Activated naive CD4-positive, alpha-beta T cell treated with anti-CD3 and anti-CD28 coated beads for 36 hours (primary cell): ENCODE measurements at regions of chr3 and their contacts with region 1.

Region 1: DNA sequence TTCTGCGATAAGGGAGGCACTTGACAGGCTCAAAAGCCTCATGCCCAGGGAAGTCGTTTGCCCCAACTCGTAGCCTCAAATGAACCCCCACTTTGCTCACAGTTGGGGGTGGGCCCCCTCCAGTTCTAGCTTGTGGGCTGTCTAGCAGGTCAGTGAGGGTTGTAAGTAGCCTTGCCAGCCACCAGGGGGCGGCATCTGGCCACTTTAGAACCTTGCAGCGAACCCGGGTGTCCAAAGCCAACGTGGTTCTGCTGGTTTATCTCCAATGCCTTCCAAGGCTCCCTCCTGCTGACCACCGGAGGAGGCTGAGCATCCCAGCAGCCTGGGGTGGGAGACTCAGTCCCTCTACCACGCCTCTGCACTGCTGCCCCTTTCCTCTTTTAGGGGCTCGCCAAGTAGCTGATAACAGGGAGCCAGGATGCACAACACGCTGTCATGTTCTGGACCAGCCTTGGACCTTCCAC is 9.2 kb upstream of the RBSN start:
- DNase-seq: peak; percentile 76
- H3K4me3 Mint-ChIP-seq: no peak overlapping the region
- H3K27ac Mint-ChIP-seq: no peak overlapping the region
- H3K4me1 Mint-ChIP-seq: no peaks in the 10 kb centered on the region
- H3K27me3 Mint-ChIP-seq: no peaks in the 10 kb centered on the region

Region 2: GRCh38 chr3:15120986-15121385 is 12.9 kb after region 1 on chr3:
- CTCF ChIA-PET with region 1: interaction called, 42 read pairs
- intact Hi-C with region 1: no loop called
- DNase-seq: no peak
- H3K4me3 Mint-ChIP-seq: no peak overlapping the region
- H3K27ac Mint-ChIP-seq: no peak overlapping the region
- H3K4me1 Mint-ChIP-seq: peaks cover 5% of the 10 kb centered on the region
- H3K27me3 Mint-ChIP-seq: peaks cover 6% of the 10 kb centered on the region

Region 3: GRCh38 chr3:15256861-15257341 is 148.8 kb after region 1 on chr3:
- CTCF ChIA-PET with region 1: interaction called, 5 read pairs
- intact Hi-C with region 1: loop called (anchors 5 kb)
- DNase-seq: no peak
- H3K4me3 Mint-ChIP-seq: no peak overlapping the region
- H3K27ac Mint-ChIP-seq: no peak overlapping the region
- H3K4me1 Mint-ChIP-seq: peaks cover 7% of the 10 kb centered on the region
- H3K27me3 Mint-ChIP-seq: no peaks in the 10 kb centered on the region

Region 4: GRCh38 chr3:15405448-15406050 is 297.4 kb after region 1 on chr3:
- CTCF ChIA-PET with region 1: interaction called, 11 read pairs
- intact Hi-C with region 1: loop called (anchors 2 kb)
- DNase-seq: peak; percentile 10
- H3K4me3 Mint-ChIP-seq: no peak overlapping the region
- H3K27ac Mint-ChIP-seq: no peak overlapping the region
- H3K4me1 Mint-ChIP-seq: peaks cover 1% of the 10 kb centered on the region
- H3K27me3 Mint-ChIP-seq: no peaks in the 10 kb centered on the region

Region 5: GRCh38 chr3:15753056-15753710 is 645.1 kb after region 1 on chr3:
- CTCF ChIA-PET with region 1: no interaction called
- intact Hi-C with region 1: no loop called
- DNase-seq: no peak
- H3K4me3 Mint-ChIP-seq: no peak overlapping the region
- H3K27ac Mint-ChIP-seq: no peak overlapping the region
- H3K4me1 Mint-ChIP-seq: peaks cover 7% of the 10 kb centered on the region
- H3K27me3 Mint-ChIP-seq: no peaks in the 10 kb centered on the region